AG04450 (cell line): ENCODE measurements at regions of chr12 and their contacts with region 1.

Region 1: GRCh38 chr12:118418385-118419057 is 42.2 kb downstream of the SUDS3 start:
- DNase-seq: no peak
- H3K4me3 ChIP-seq: no peak overlapping the region
- H3K27ac ChIP-seq: no peak overlapping the region
- H3K27me3 ChIP-seq: no peaks in the 10 kb centered on the region
- CTCF ChIP-seq: no peak

Region 2: GRCh38 chr12:118436002-118436730 is 17.6 kb after region 1 on chr12:
- CTCF ChIA-PET with region 1: no interaction called
- POLR2A ChIA-PET with region 1: no interaction called
- DNase-seq: no peak
- H3K4me3 ChIP-seq: no peak overlapping the region
- H3K27ac ChIP-seq: no peak overlapping the region
- H3K27me3 ChIP-seq: no peaks in the 10 kb centered on the region
- CTCF ChIP-seq: no peak

Region 3: DNA sequence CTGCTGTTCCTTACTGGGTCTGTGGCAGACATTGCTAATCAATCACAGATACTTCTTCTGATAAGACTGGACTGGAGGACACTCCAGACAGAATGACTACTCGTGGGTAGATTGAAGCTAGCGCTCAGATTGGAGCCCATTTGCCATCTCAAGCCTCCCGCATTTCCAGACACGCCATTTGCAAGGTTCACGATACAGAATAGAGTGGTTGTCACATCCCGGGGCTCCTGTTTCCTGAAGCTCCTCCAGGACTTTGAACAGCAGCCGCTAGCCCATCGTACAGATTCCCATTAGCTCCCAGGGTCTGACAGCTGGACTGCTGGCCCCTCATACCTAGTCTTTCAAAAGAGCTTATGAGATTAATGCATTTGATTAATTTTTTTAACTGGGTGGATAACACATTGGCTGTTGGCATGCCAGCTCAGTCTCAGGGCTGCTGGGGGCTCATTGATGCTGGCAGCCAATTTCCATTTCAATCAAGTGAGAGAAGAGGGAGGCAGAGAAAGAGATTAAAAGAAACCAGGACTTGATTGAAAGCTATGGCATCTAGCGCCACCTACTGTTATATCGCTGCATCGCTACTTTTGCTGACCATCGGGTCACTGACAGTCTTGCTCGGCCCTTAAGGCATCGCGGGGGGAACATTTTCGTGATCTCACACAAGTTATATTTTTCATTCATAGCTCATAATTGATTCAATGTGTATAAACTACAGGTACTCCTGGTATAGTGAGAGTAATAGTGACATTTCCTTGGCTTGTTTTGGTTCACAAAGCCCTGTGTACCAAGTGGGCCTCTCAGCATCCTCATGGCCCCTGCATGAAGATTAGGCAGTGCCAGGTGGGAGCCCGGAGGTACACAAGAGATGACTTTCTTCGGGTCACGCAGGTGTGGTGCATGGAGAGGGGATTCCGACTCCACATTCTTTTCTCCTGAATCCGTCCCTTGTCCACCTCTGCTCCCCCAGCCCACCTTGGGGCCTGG is 994.6 kb after region 1 on chr12:
- CTCF ChIA-PET with region 1: interaction called, 10 read pairs
- POLR2A ChIA-PET with region 1: no interaction called
- DNase-seq: peak; percentile 24
- H3K4me3 ChIP-seq: no peak overlapping the region
- H3K27ac ChIP-seq: no peak overlapping the region
- H3K27me3 ChIP-seq: no peaks in the 10 kb centered on the region
- CTCF ChIP-seq: peak; percentile 81